Right ventricle myocardium inferior (tissue), 1 donor: ENCODE measurements at regions of chr12 and their contacts with region 1.

Region 1: GRCh38 chr12:56158029-56158925 is at the start of gene MYL6:
- DNase-seq: peak; percentile 97
- ATAC-seq: peak; percentile 91
- total RNA-seq, gene MYL6: 673 TPM

Region 2: DNA sequence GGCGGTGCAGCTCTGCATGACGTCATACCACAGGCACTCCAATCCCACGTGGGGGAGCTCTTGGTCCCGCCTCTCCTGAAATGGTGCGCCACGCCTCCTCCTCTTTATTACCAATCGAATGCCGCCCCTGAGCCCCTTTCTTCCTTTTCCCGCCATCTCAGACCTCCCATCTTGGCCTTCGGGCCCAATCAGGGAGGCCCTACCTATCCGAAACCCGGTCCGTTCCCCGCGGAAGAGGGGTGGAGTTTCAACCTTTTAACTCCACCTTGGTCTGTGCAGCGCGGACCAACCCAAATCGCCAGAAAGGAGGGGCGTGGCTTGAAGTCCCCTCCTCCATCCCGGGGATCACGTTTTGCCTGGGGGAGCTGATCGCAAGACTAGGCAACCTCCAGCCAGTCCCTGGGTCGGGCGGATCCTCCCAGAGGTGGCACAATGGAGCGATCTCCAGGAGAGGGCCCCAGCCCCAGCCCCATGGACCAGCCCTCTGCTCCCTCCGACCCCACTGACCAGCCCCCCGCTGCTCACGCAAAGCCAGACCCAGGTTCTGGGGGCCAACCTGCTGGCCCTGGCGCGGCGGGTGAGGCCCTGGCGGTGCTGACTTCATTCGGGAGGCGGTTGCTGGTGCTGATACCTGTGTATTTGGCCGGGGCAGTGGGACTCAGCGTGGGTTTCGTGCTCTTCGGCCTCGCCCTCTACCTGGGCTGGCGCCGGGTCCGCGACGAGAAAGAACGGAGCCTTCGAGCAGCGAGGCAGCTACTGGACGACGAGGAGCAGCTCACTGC is 30.2 kb before region 1 on chr12 and contains the start of gene ESYT1:
- intact Hi-C with region 1: loop called (anchors 1 kb)
- DNase-seq: peak; percentile 99
- ATAC-seq: peak; percentile 97
- total RNA-seq, gene ESYT1: 33.6 TPM

Region 3: GRCh38 chr12:56189176-56189917 is 31.1 kb after region 1 on chr12 and contains the start of gene SMARCC2:
- intact Hi-C with region 1: loop called (anchors 2 kb)
- DNase-seq: peak; percentile 90
- ATAC-seq: peak; percentile 89
- total RNA-seq, gene SMARCC2: 68.8 TPM